HAP-1 (cell line): ENCODE measurements at regions of chr7 and their contacts with region 1.

Region 1: GRCh38 chr7:122528879-122529481 is 169.9 kb downstream of the RNF133 start:
- DNase-seq: peak in 1 of 2 experiments; percentile 49
- H3K4me3 ChIP-seq: no peak overlapping the region
- H3K4me1 ChIP-seq: no peaks in the 10 kb centered on the region; the same call in 1 of the 2 replicates
- H3K27me3 ChIP-seq: peaks cover 4% of the 10 kb centered on the region; the same call in 1 of the 2 replicates

Region 2: GRCh38 chr7:122092964-122093797 is 435.8 kb before region 1 on chr7:
- in situ Hi-C with region 1: loop called (anchors 25 kb)
- DNase-seq: peak; percentile 53 to 80
- H3K4me3 ChIP-seq: no peak overlapping the region
- H3K4me1 ChIP-seq: no peaks in the 10 kb centered on the region
- H3K27me3 ChIP-seq: no peaks in the 10 kb centered on the region

Region 3: GRCh38 chr7:122200888-122201287 is 328.1 kb before region 1 on chr7:
- in situ Hi-C with region 1: loop called (anchors 10 kb)
- DNase-seq: no peak
- H3K4me3 ChIP-seq: no peak overlapping the region
- H3K4me1 ChIP-seq: no peaks in the 10 kb centered on the region
- H3K27me3 ChIP-seq: peaks cover 10% of the 10 kb centered on the region; the same call in 1 of the 2 replicates

Region 4: GRCh38 chr7:122790132-122790531 is 261.2 kb after region 1 on chr7:
- in situ Hi-C with region 1: no loop called
- DNase-seq: no peak
- H3K4me3 ChIP-seq: no peak overlapping the region
- H3K4me1 ChIP-seq: no peaks in the 10 kb centered on the region
- H3K27me3 ChIP-seq: peaks cover 8% of the 10 kb centered on the region; the same call in 1 of the 2 replicates

Region 5: GRCh38 chr7:122813845-122814244 is 284.9 kb after region 1 on chr7:
- in situ Hi-C with region 1: no loop called
- DNase-seq: no peak
- H3K4me3 ChIP-seq: no peak overlapping the region
- H3K4me1 ChIP-seq: no peaks in the 10 kb centered on the region
- H3K27me3 ChIP-seq: peaks cover 7% of the 10 kb centered on the region; the same call in 1 of the 2 replicates